Mammary epithelial cell (primary cell): ENCODE measurements at regions of chr6 and their contacts with region 1.

Region 1: DNA sequence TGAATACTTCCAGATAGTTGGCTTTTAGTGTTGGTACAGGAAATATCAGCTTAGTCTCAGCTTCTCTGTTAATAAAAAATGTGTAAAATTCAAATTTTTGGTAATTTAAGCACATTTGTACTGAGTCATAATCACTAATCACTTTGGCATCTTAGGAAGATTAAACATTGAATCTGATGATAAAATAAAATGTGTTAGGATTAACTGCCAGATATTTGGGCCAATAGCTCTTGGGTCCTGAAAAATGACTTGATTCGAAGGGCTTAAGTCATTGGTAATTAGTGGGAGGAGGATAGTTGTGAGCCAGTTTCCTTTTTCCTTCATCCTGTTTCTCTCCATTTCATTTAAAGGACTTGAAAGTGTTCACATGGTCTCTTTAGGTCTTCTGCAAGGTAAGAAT is 426.1 kb downstream of the RFPL4B start:
- DNase-seq: no peak
- H3K4me3 ChIP-seq: no peak overlapping the region
- H3K27ac ChIP-seq: no peak overlapping the region
- H3K4me1 ChIP-seq: no peaks in the 10 kb centered on the region
- H3K27me3 ChIP-seq: no peaks in the 10 kb centered on the region
- CTCF ChIP-seq: no peak

Region 2: GRCh38 chr6:112416866-112417265 is 356.3 kb before region 1 on chr6:
- CTCF ChIA-PET with region 1: no interaction called
- dilution Hi-C with region 1: no loop called
- in situ Hi-C with region 1: no loop called
- intact Hi-C with region 1: loop called (anchors 10 kb)
- DNase-seq: peak; percentile 10
- H3K4me3 ChIP-seq: no peak overlapping the region
- H3K27ac ChIP-seq: no peak overlapping the region
- H3K4me1 ChIP-seq: peaks cover 10% of the 10 kb centered on the region
- H3K27me3 ChIP-seq: no peaks in the 10 kb centered on the region
- CTCF ChIP-seq: no peak